PC-3 (cell line): ENCODE measurements at regions of chr13 and their contacts with region 1.

Region 1: GRCh38 chr13:75566658-75567057 is 17.1 kb downstream of the UCHL3 start:
- DNase-seq: peak; percentile 64
- ATAC-seq: peak; percentile 89
- H3K4me3 ChIP-seq: no peak overlapping the region
- H3K27ac ChIP-seq: no peak overlapping the region
- H3K4me1 ChIP-seq: 0 out of 2 replicates have a peak, but pooled peaks cover 6% of the 10 kb centered on the region
- H3K27me3 ChIP-seq: no peaks in the 10 kb centered on the region
- CTCF ChIP-seq: peak; percentile 57

Region 2: DNA sequence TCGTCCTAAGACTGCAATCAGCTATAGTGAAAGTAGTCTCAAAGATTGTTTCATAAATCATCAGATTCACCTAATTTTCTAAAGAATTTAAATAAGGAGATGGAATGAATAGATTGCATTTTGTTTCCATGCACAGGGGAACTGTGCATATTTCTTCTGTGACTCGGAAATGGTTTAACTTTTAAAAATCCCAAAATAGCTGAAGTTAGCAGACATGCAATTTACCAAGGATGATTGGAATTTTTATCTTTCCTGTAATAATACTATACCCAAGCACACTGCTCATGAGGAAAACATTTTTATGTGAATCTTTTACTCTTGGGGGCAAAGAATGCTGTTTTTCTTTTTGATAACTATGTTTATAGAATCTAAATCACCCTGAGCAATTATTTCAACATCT is 54.5 kb after region 1 on chr13:
- CTCF ChIA-PET with region 1: no interaction called
- POLR2A ChIA-PET with region 1: no interaction called
- intact Hi-C with region 1: loop called (anchors 5 kb)
- DNase-seq: peak; percentile 41
- ATAC-seq: peak; percentile 65
- H3K4me3 ChIP-seq: no peak overlapping the region
- H3K27ac ChIP-seq: peak overlapping the region; percentile 21; the same call in 1 of the 2 replicates
- H3K4me1 ChIP-seq: peaks cover 13% of the 10 kb centered on the region
- H3K27me3 ChIP-seq: no peaks in the 10 kb centered on the region
- CTCF ChIP-seq: no peak

Region 3: GRCh38 chr13:75635828-75636435 is 69.3 kb after region 1 on chr13 and contains the start of gene LMO7:
- CTCF ChIA-PET with region 1: no interaction called
- POLR2A ChIA-PET with region 1: no interaction called
- intact Hi-C with region 1: loop called (anchors 5 kb)
- DNase-seq: peak; percentile 46
- ATAC-seq: peak; percentile 60
- H3K4me3 ChIP-seq: peak within 1 kb of the TSS; percentile 90
- H3K27ac ChIP-seq: peak within 1 kb of the TSS; percentile 10; the same call in 1 of the 2 replicates
- H3K4me1 ChIP-seq: peaks cover 13% of the 10 kb centered on the region
- H3K27me3 ChIP-seq: no peaks in the 10 kb centered on the region
- CTCF ChIP-seq: no peak
- total RNA-seq, gene LMO7: 83.6 and 107 TPM in 2 replicates

Region 4: GRCh38 chr13:75675421-75675820 is 108.8 kb after region 1 on chr13:
- CTCF ChIA-PET with region 1: no interaction called
- POLR2A ChIA-PET with region 1: no interaction called
- intact Hi-C with region 1: loop called (anchors 2 kb)
- DNase-seq: no peak
- ATAC-seq: no peak
- H3K4me3 ChIP-seq: no peak overlapping the region
- H3K27ac ChIP-seq: no peak overlapping the region
- H3K4me1 ChIP-seq: no peaks in the 10 kb centered on the region
- H3K27me3 ChIP-seq: no peaks in the 10 kb centered on the region
- CTCF ChIP-seq: no peak

Region 5: DNA sequence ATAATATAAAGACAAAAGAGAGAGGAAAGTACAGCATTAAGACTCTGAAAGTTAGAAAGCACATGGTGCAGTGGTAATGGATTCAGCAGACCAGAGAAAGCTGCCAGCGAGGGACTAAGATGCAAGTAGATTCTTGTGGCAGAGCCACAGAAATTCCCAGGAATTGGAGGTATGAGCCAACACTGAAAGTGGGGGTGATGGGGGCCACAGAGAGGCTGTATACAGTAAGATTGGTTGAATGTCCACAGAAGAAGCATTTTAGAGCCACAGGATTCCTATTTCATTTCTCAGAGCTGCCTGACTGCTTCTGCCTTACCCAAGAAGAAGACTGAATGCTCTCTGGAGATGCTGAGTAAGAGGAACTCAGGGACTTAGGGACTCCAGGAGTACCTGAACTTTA is 364.5 kb after region 1 on chr13:
- CTCF ChIA-PET with region 1: no interaction called
- POLR2A ChIA-PET with region 1: no interaction called
- intact Hi-C with region 1: no loop called
- DNase-seq: no peak
- ATAC-seq: no peak
- H3K4me3 ChIP-seq: no peak overlapping the region
- H3K27ac ChIP-seq: no peak overlapping the region
- H3K4me1 ChIP-seq: peaks cover 20% of the 10 kb centered on the region
- H3K27me3 ChIP-seq: no peaks in the 10 kb centered on the region
- CTCF ChIP-seq: no peak